Left colon (tissue), 2 donors: ENCODE measurements at regions of chr10 and their contacts with region 1.

Region 1: DNA sequence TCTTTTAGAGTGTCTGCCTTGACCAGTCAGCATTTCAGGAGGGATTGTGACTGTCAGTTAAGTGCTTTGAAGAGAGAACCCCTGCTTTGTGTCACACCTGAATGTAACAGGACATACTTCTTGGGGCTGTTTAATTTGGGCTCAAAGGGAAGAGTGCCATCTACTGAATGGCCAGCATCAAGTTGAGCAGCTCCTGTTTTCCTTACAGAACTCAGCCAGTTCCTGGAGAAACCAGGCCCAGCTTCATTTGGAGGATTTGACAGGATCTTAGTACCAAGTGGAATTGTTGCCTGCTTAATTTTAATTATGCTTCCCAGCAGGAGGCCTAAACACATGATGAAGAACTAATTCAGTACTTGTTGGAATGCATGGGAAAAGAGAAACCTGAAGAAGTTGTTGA is 8.3 kb downstream of the ADD3 start:
- DNase-seq: no peak
- ATAC-seq: peak; percentile 71

Region 2: GRCh38 chr10:109883859-109884771 is 131.9 kb before region 1 on chr10:
- intact Hi-C with region 1: loop called in 1 of 2 experiments (anchors 10 kb)
- DNase-seq: peak; percentile 47 to 67
- ATAC-seq: peak; percentile 91

Region 3: DNA sequence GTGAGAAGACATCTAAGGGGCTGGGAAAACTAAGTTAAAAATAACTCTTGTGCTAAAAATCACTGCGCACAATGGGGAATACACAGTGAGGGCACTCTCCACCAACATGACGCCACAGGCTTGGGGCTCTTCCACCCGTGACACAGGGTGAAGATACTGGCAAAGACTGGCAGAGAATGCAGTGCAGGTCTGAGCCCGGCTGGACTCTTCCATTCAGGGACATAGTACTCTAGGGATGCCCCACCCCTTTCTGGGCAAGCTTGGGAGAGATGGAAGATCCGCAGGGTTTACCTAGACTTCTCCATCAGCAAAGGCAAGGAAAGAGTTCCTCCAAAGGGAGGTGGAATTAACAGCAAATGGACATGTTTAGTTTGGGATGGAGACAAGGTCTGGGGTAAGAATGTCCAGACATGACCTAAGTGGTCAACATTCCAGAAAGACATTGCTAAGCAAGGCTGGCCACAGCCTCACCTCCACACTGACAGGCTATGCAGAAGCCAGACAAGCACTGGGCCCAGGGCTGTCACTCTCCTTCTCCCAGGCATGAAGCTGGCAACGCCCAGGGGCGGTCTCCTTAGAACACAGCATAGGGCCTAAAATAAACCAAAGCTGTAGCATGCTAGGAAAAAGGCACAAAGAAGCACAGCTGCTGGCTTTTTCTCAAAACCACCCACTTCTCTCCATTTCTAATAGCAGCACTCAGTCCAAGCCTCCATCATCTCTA is 120.8 kb before region 1 on chr10:
- intact Hi-C with region 1: no loop called
- DNase-seq: peak in 1 of 2 donors; percentile 53
- ATAC-seq: peak; percentile 64

Region 4: GRCh38 chr10:110083884-110084283 is 67.8 kb after region 1 on chr10:
- intact Hi-C with region 1: no loop called
- DNase-seq: no peak
- ATAC-seq: no peak